ENCODE measurements at regions of chr2 and their contacts with region 1.

Region 1: DNA sequence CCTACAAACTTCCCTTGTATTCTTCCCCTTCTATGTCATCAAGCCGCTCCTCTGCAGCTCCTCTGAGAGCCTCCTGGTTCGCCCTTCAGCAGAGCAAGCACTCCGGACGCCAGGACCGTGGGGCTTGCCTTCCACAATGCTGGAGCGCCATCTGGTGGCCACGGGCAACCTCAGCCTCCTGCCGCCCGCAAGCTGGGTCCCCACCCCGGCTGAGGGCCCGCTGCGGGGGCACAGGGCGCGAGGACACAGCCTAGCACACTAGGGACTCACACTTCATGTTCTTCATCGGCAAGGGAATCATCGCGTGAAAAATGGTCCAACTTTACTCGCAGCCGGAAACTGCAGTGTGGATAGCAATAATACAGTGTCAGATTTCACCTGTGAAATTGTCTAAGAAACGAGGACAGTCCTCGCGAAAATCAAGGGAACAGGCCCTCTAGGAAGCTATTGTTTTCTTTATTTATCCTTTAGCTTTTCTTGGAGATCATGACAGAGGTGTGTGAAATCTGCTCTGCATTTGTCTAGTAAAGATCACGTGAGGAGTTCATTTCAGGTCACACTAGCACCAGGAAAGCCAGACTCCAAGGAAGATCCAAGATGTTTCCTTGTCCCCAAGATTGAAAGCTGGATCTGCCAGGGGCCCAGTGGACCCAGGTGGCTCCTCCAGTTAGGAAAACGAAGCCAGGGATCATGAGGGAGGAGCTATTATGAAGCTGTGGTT is 5.8 kb downstream of the PRLH start:
- DNase-seq: peak; percentile 93
- H3K4me3 Mint-ChIP-seq: peak overlapping the region; percentile 47
- H3K27ac Mint-ChIP-seq: no peak overlapping the region
- H3K4me1 Mint-ChIP-seq: peaks cover 33% of the 10 kb centered on the region
- H3K27me3 Mint-ChIP-seq: peaks cover 10% of the 10 kb centered on the region
- CTCF ChIP-seq: peak; percentile 98

Region 2: GRCh38 chr2:237122214-237122666 is 449.9 kb before region 1 on chr2:
- CTCF ChIA-PET with region 1: interaction called, 8 read pairs
- intact Hi-C with region 1: loop called (anchors 10 kb)
- DNase-seq: peak; percentile 84
- H3K4me3 Mint-ChIP-seq: no peak overlapping the region
- H3K27ac Mint-ChIP-seq: peak overlapping the region; percentile 79
- H3K4me1 Mint-ChIP-seq: peaks cover 6% of the 10 kb centered on the region
- H3K27me3 Mint-ChIP-seq: no peaks in the 10 kb centered on the region
- CTCF ChIP-seq: peak; percentile 85

Region 3: GRCh38 chr2:237165405-237166276 is 406.5 kb before region 1 on chr2:
- CTCF ChIA-PET with region 1: interaction called, 10 read pairs
- intact Hi-C with region 1: loop called (anchors 5 kb)
- DNase-seq: peak; percentile 52
- H3K4me3 Mint-ChIP-seq: no peak overlapping the region
- H3K27ac Mint-ChIP-seq: no peak overlapping the region
- H3K4me1 Mint-ChIP-seq: no peaks in the 10 kb centered on the region
- H3K27me3 Mint-ChIP-seq: peaks cover 48% of the 10 kb centered on the region
- CTCF ChIP-seq: peak; percentile 62

Region 4: DNA sequence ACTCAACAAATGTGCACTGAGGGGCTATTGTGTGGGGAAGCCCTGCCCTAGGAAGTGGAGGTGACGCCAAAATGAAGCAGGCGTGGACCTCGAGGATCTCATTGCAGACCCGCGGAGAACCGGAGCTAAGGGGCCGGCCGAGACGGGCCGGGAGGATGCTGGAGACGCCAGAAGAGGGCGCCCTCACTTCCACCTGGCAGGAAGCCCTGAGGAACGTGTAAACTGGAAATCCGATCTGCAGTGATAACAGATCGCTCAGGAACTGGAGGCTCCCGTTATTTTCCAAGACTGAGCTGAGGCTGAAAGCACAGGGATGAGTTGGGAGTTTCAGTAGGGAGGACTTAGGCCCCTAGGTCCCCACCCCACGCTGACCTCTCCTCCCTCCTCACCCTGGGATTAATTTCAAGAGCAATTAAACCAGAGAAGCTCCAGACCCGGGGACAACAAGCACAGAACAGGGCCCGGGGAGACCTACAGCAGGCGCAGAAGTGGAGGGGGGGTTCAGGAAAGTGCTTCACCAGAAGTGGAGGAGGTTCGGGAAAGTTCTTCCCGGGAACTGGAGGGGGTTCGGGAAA is 150.6 kb before region 1 on chr2:
- CTCF ChIA-PET with region 1: interaction called, 28 read pairs
- intact Hi-C with region 1: loop called (anchors 5 kb)
- DNase-seq: peak; percentile 82
- H3K4me3 Mint-ChIP-seq: peak overlapping the region; percentile 31
- H3K27ac Mint-ChIP-seq: no peak overlapping the region
- H3K4me1 Mint-ChIP-seq: peaks cover 19% of the 10 kb centered on the region
- H3K27me3 Mint-ChIP-seq: peaks cover 92% of the 10 kb centered on the region
- CTCF ChIP-seq: peak; percentile 60

Region 5: DNA sequence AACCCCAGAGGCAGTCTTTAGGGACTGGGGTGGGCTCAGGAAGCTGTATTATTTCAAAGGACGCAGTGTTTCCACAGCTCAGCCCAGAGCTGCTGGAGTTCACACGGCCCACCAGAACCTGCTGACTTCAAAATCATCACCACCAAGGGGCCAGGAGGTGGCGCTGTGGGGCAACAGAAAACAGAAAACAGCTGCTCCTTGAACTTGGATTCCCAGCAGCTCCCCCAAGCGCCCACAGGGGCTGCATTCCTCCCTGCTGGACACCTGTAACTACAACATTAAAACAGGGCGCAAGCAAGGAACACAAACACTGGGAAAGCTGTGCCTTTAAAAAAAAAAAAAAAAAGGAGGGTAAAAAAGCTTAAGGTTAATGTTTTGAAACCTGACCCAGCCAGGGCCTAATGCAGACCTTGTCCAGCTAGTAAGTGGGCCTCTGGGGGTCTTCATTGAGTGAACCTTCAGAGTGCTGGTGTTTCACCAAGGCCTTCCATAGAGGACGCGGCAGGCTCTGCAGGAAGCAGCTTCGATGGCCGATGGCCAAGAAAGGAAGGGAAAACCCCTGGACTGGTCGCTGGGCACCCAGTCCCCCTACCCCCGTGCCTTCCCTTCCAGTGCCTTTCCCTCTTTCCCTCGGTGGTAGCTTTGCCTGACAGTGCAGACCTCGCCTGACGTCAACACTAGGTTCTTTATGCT is 59.3 kb before region 1 on chr2:
- CTCF ChIA-PET with region 1: interaction called, 58 read pairs
- intact Hi-C with region 1: loop called (anchors 2 kb)
- DNase-seq: peak; percentile 89
- H3K4me3 Mint-ChIP-seq: no peak overlapping the region
- H3K27ac Mint-ChIP-seq: no peak overlapping the region
- H3K4me1 Mint-ChIP-seq: peaks cover 20% of the 10 kb centered on the region
- H3K27me3 Mint-ChIP-seq: no peaks in the 10 kb centered on the region
- CTCF ChIP-seq: peak; percentile 95

Measured in Calu3 (cell line).